Activated CD4-positive, alpha-beta T cell treated with anti-CD3 and anti-CD28 coated beads, Interleukin-2, amount 10 ng/mL, durations not matched to agents 24 days and 14 days (primary cell): ENCODE measurements at regions of chr3 and their contacts with region 1.

Region 1: DNA sequence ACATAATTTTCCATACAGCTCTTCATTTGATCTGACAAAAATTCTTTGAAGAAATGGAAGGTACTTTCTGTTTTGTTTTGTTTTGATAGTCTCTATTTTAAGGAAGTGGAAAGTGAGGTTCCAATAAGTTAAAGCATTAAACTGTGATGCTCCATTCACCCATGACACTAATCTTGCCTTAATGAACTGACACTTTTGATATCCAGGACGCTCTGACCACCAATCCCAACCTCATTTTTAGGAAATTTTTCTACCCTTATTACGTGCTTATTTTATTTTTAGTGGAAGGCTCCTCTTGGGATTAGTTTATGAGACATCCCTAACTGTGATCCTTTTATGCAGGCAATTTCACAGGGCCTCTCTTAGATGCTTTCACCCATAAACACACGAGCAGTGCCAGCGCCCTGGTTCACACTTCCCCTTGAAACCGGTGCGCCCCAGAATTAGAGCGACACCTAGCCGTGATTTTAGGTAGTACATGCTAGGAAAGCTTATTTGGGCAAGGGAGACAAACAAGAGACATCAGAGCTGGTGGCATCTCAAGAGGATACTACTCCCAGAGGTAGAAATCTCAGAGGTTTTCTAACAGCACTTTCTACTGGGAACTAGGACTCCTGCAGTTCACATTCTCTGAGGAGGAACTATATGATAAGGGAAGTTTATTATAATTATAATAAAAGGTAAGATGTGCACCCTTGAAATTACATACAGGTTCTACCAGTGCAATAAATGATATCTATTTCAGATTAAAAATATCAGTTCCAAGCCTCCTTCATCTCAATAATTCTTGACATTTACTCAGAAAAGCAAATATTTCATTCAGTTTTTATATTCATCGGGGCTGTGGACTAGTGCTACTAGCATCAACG is 173.9 kb downstream of the SLC9A9 start:
- DNase-seq: peak; percentile 94
- H3K4me3 Mint-ChIP-seq: peak overlapping the region; percentile 21
- H3K27ac Mint-ChIP-seq: no peak overlapping the region
- H3K4me1 Mint-ChIP-seq: peaks cover 4% of the 10 kb centered on the region
- H3K27me3 Mint-ChIP-seq: no peaks in the 10 kb centered on the region

Region 2: DNA sequence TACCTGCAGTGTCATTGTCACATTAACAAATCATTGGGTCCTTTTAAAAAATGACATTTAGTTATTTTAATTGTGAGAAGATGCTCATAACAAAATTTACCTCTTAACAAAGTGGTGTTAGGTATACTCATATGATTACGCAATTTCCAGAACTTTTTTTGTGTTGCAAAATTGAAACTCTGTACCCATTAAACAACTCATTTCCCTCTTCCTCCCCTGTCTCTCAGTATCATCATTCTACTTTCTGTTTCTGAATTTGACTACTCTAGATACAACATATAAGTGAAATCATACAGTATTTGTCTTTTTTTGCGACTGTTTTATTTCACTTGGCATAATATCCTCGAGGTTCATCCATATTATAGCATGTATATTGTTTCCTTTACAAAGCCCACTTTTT is 613.4 kb before region 1 on chr3:
- intact Hi-C with region 1: loop called (anchors 2 kb)
- DNase-seq: no peak
- H3K4me3 Mint-ChIP-seq: peak overlapping the region; percentile 40
- H3K27ac Mint-ChIP-seq: peak overlapping the region; percentile 13
- H3K4me1 Mint-ChIP-seq: peaks cover 16% of the 10 kb centered on the region
- H3K27me3 Mint-ChIP-seq: no peaks in the 10 kb centered on the region

Region 3: DNA sequence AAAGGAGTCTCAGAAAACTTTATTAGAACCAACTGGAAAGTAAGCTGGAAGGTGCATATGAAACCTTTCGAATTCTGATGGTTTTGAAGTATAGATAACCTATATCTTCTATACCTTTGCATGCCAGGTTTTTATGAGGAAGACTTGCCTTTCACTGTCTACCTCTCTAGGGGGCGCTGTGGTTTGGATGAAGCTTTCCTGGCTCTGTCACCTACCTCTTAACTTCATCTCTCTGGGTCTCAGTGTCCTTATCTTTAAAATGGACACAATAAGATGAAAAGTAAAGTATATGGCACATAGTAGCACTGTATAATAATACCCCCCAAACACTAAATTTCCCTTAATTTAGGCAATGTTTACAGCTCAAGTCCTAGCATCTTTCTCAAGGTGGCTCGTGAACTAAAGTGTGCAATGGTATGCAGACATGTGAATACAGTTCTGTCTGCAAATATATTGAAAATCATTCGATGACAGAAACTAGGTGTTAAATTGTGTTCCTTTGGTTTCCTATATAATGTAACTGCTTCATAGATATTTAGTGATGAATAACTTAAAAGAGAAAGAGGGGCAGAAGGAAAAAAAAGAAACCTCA is 240.5 kb before region 1 on chr3:
- intact Hi-C with region 1: loop called (anchors 1 kb)
- DNase-seq: peak; percentile 73
- H3K4me3 Mint-ChIP-seq: no peak overlapping the region
- H3K27ac Mint-ChIP-seq: no peak overlapping the region
- H3K4me1 Mint-ChIP-seq: no peaks in the 10 kb centered on the region
- H3K27me3 Mint-ChIP-seq: no peaks in the 10 kb centered on the region

Region 4: GRCh38 chr3:143585720-143586456 is 88.4 kb before region 1 on chr3:
- intact Hi-C with region 1: loop called (anchors 5 kb)
- DNase-seq: peak; percentile 59
- H3K4me3 Mint-ChIP-seq: no peak overlapping the region
- H3K27ac Mint-ChIP-seq: peak overlapping the region; percentile 62
- H3K4me1 Mint-ChIP-seq: peaks cover 14% of the 10 kb centered on the region
- H3K27me3 Mint-ChIP-seq: no peaks in the 10 kb centered on the region